Mammary epithelial cell (primary cell): ENCODE measurements at regions of chr11 and their contacts with region 1.

Region 1: GRCh38 chr11:104095791-104096190 is 59.4 kb downstream of the DDI1 start:
- DNase-seq: no peak
- H3K4me3 ChIP-seq: no peak overlapping the region
- H3K27ac ChIP-seq: no peak overlapping the region
- H3K4me1 ChIP-seq: no peaks in the 10 kb centered on the region
- H3K27me3 ChIP-seq: no peaks in the 10 kb centered on the region
- CTCF ChIP-seq: peak in 1 of 2 donors; percentile 5

Region 2: DNA sequence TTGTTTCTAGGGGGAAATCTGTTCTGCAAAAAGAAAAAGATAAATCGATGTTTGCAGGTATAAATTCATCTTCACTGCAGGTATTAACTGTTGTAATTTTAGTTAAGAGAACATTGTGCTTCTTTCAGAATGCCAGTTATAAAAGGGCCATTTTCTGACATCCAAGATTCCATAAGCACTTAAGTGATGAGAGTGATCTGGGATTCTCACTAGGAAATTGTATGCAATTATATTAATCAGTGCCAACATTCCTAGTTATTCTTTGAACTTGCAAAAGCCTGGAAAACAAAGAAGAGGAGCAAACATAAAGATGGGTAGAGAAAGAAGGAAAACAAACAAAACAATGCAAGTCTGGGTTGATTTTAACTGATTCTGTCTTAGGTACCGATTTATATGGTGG is 54.0 kb before region 1 on chr11:
- CTCF ChIA-PET with region 1: no interaction called
- dilution Hi-C with region 1: no loop called
- in situ Hi-C with region 1: no loop called
- intact Hi-C with region 1: loop called (anchors 2 kb)
- DNase-seq: no peak
- H3K4me3 ChIP-seq: no peak overlapping the region
- H3K27ac ChIP-seq: no peak overlapping the region
- H3K4me1 ChIP-seq: no peaks in the 10 kb centered on the region
- H3K27me3 ChIP-seq: no peaks in the 10 kb centered on the region
- CTCF ChIP-seq: no peak